BJ (cell line): ENCODE measurements at regions of chr2 and their contacts with region 1.

Region 1: DNA sequence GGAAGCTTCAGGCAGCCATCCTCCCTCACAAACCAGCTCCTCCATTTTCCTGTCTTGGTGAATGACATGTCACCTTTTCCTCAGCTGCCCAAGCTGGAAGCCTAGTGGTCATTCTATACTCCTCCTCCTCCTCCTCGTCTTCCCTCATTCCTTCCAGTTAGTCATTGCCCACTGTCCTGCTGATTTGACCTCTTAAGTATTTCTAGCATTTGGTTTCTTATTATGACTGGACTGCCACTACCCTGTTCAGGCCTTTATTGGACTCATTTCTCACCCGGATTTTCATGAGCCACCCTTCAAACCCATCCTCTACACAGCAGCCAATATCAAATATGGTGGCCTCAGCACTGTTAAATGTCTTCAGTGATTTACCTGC is 21.9 kb upstream of the MGAT5 start:
- DNase-seq: peak; percentile 37
- H3K4me3 ChIP-seq: no peak overlapping the region
- H3K27me3 ChIP-seq: no peaks in the 10 kb centered on the region
- CTCF ChIP-seq: peak; percentile 12; the same call in 1 of the 2 replicates

Region 2: DNA sequence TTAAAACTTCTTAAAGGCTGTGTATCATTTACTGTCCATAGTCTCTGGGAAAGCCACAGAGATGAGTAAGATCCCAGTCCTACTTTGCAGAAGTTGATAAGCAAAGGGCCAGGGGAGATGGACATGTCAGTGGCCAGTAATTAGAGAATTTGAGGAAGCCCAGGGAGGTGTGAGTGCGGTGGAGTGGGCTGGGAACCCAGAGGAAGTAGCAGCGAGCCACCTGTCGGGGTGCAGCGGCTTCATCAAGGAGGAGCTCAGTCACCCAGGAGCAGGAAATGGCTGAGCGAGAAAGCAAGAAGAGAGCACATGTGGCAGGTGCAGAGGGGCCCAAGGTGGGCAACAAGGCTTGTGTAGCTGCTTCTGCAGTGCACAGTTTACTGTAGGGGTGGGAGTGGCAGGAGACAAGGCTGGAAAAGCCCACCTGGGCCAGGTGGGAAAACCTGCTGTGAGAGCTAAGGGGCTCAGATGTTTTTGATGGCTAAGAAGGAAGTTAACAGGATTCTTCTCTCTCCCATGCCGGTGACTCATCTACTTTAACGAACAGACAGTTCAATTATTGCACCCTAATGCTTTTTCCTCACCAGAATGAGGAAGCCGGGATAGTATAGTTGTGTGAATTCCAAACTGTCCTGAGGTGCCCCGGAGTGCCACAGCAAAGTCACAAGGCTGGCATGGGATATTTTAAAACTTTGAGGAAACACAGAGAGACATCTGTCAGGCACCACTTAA is 12.9 kb before region 1 on chr2:
- CTCF ChIA-PET with region 1: interaction called, 10 read pairs
- POLR2A ChIA-PET with region 1: interaction called, 3 read pairs
- DNase-seq: no peak
- H3K4me3 ChIP-seq: no peak overlapping the region
- H3K27me3 ChIP-seq: no peaks in the 10 kb centered on the region
- CTCF ChIP-seq: no peak

Region 3: GRCh38 chr2:134245340-134245984 is 13.5 kb after region 1 on chr2:
- CTCF ChIA-PET with region 1: interaction called, 12 read pairs
- POLR2A ChIA-PET with region 1: no interaction called
- DNase-seq: no peak
- H3K4me3 ChIP-seq: no peak overlapping the region
- H3K27me3 ChIP-seq: no peaks in the 10 kb centered on the region
- CTCF ChIP-seq: peak; percentile 87